GM12878 (cell line): ENCODE measurements at regions of chr20 and their contacts with region 1.

Region 1: DNA sequence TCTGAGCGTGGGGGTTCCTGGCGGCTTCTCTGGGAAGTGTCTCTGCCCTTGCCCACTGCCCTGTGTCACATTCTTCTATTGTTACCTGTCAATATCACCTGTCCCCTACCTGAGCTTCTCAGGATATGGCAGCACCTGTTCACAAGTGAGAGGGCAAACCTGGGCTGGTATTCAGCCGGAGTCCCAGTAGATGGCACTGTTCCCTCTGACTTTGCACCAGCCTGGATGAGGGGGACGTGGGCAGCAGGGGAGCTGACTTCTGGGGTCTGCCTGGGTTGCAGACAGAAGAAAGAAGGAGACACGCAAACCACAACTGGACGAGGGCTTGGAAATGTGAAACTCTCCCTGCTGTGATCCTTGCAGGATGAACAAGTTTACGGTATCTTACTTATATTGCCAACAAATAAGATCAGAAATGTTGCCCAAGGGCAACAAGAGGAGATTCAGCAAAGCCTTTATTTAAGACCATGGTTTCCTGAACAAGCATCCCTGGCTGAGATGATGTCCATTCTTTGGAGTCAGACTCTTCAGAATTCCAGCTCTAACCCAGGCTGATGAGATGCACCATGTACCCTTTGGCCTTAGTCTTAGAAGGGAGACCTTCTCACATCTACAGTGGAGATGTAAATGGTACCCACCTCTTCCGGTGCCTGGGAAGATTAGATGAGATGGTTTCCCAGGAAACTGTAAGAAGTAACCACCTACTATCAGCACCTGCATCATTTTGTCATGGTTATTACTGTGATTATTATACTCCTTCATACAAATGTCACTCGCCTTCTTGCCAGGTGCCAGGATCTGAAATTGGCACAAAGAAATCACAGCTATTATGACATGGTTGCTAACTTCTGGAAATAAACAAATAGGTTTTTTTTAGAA is 400.0 kb upstream of the CDH4 start:
- DNase-seq: no peak
- ATAC-seq: no peak
- H3K4me3 ChIP-seq: no peak overlapping the region
- H3K27ac ChIP-seq: no peak overlapping the region
- H3K4me1 ChIP-seq: no peaks in the 10 kb centered on the region
- H3K27me3 ChIP-seq: no peaks in the 10 kb centered on the region
- CTCF ChIP-seq: peak in 1 of 3 experiments; percentile 31; a peak in 1 of 6 replicates
- EP300 ChIP-seq: no peak
- POLR2A ChIP-seq: no peak
- RAD21 ChIP-seq: 0 out of 2 replicates have a peak, but pooled peaks have one; percentile 4

Region 2: DNA sequence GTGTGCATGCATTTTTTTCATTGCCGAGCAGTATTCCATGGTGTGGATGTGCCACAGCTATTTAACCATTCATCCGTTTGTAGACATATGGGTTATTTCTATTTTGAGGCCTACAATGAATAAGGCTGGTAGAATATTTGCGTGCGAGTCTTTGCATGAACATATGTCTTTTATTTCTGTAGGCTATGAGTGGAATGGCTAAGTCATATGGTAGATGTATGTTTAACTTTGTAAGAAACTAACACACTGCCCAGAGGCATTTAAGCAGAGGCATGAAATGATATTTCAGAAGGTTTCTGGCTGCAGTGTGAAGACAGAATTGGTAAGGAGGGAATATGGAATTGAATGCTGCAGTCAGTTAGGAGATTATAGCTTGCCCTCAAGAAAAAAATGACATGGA is 57.4 kb before region 1 on chr20:
- CTCF ChIA-PET with region 1: no interaction called
- POLR2A ChIA-PET with region 1: no interaction called
- RAD21 ChIA-PET with region 1: no interaction called
- SMC1A ChIA-PET with region 1: no interaction called
- in situ Hi-C with region 1: no loop called
- intact Hi-C with region 1: no loop called
- DNase-seq: no peak
- ATAC-seq: no peak
- H3K4me3 ChIP-seq: no peak overlapping the region
- H3K27ac ChIP-seq: no peak overlapping the region
- H3K4me1 ChIP-seq: no peaks in the 10 kb centered on the region
- H3K27me3 ChIP-seq: no peaks in the 10 kb centered on the region
- CTCF ChIP-seq: no peak
- EP300 ChIP-seq: no peak
- POLR2A ChIP-seq: no peak
- RAD21 ChIP-seq: no peak

Region 3: DNA sequence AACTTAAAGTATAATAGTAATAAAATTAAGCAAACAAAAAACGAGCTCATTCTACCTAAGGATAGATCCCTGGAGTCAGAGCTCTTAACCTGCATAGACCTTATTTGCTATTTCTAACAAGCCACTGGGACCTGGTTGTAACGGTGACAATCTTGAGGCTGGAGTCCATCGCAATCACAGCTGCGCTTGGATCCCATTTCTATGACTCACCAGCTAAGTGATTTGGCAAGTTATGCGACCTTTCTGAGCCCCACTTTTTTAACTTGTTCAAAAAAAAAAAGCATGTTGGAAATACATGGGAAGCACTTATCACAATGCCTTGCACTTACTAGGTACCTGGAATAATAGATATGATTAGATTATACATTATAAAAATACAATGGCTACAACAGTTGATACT is 10.5 kb after region 1 on chr20:
- CTCF ChIA-PET with region 1: no interaction called
- POLR2A ChIA-PET with region 1: no interaction called
- RAD21 ChIA-PET with region 1: no interaction called
- SMC1A ChIA-PET with region 1: no interaction called
- in situ Hi-C with region 1: no loop called
- intact Hi-C with region 1: no loop called
- DNase-seq: no peak
- ATAC-seq: no peak
- H3K4me3 ChIP-seq: no peak overlapping the region
- H3K27ac ChIP-seq: no peak overlapping the region
- H3K4me1 ChIP-seq: no peaks in the 10 kb centered on the region
- H3K27me3 ChIP-seq: no peaks in the 10 kb centered on the region
- CTCF ChIP-seq: no peak
- EP300 ChIP-seq: no peak
- POLR2A ChIP-seq: no peak
- RAD21 ChIP-seq: no peak

Region 4: DNA sequence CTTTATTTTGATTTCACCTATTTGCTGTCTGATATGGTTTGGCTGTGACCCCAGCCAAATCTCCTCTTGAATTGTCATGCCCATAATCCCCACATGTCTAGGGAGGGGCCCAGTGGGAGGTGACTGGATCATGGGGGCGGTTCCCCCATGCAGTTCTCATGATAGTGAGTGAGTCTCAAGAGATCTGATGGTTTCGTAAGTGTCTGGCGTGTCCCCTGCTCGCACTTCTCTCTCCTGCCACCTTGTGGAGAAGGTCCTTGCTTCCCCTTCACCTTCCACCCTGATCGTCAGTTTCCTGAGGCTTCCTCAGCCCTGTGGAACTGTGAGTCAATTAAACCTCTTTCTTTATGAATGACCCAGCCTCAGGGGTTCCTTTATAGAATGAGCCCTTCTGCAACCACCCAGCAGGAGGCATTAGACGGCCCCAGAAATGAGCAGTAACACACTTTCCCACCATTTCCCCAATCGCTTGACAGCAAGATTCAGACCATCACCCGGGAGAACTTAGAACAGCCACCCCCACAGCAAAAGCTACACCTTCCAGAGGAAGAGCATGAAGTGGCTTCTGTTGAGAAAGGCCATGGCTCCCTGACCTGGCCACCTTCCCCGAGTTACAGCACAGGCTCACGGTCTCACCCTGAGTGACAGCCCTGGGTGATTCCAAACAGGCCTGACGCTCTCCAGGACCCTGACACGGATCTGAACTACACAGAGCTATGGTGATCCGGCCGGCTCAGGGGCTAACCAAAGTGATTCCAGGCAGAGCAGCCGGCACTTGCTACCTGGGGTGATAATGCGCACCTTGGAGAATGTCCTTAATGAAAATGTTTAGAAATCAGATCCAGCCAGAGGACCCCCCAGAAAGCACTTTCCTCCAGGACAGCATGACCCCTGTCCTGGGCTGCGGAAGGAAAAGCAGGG is 268.8 kb after region 1 on chr20:
- CTCF ChIA-PET with region 1: no interaction called
- POLR2A ChIA-PET with region 1: no interaction called
- RAD21 ChIA-PET with region 1: interaction called, 4 read pairs
- SMC1A ChIA-PET with region 1: no interaction called
- in situ Hi-C with region 1: no loop called
- intact Hi-C with region 1: loop called (anchors 1 kb)
- DNase-seq: no peak
- ATAC-seq: no peak
- H3K4me3 ChIP-seq: no peak overlapping the region
- H3K27ac ChIP-seq: no peak overlapping the region
- H3K4me1 ChIP-seq: no peaks in the 10 kb centered on the region
- H3K27me3 ChIP-seq: no peaks in the 10 kb centered on the region
- CTCF ChIP-seq: 0 out of 6 replicates have a peak, but pooled peaks of 1 of the 3 experiments have one; percentile 1
- EP300 ChIP-seq: no peak
- POLR2A ChIP-seq: no peak
- RAD21 ChIP-seq: no peak

Region 5: DNA sequence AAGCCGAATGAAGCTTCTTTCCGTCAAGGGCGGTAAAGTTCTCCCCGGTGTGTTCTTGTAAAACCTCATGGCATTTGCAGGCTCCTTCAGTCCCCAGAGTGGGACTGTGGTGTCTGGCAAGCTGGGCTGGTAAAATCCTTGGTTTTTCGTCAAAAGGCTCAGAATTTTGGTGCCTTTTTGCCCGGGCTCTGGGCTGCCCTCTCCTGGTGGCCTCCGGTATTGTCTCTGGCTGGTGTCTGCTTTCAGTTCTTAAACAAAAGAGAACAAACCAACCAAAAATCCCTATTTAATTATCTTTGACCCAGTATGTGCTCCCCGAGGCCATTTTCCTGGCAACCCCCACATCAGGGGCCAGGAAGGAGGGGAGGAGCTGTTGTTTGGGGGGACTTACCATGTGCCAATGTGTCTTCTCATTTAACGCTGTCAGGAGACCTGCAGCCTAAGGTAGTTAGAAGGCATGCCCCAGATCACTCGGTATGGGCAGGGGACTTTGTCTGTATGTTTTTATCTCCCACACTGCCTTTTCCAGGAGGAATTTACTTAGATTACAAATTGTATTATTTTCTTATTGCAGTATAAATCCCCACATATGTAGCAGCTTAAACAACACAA is 411.1 kb after region 1 on chr20:
- CTCF ChIA-PET with region 1: no interaction called
- POLR2A ChIA-PET with region 1: no interaction called
- RAD21 ChIA-PET with region 1: no interaction called
- SMC1A ChIA-PET with region 1: no interaction called
- in situ Hi-C with region 1: no loop called
- intact Hi-C with region 1: loop called (anchors 5 kb)
- DNase-seq: no peak
- ATAC-seq: no peak
- H3K4me3 ChIP-seq: no peak overlapping the region
- H3K27ac ChIP-seq: no peak overlapping the region
- H3K4me1 ChIP-seq: no peaks in the 10 kb centered on the region
- H3K27me3 ChIP-seq: no peaks in the 10 kb centered on the region
- CTCF ChIP-seq: peak; percentile 34 to 64 (median 36); a peak in 5 of 6 replicates
- EP300 ChIP-seq: no peak
- POLR2A ChIP-seq: no peak
- RAD21 ChIP-seq: 0 out of 2 replicates have a peak, but pooled peaks have one; percentile 24